Right lobe of liver (tissue), 6 donors: ENCODE measurements at regions of chr1 and their contacts with region 1.

Region 1: DNA sequence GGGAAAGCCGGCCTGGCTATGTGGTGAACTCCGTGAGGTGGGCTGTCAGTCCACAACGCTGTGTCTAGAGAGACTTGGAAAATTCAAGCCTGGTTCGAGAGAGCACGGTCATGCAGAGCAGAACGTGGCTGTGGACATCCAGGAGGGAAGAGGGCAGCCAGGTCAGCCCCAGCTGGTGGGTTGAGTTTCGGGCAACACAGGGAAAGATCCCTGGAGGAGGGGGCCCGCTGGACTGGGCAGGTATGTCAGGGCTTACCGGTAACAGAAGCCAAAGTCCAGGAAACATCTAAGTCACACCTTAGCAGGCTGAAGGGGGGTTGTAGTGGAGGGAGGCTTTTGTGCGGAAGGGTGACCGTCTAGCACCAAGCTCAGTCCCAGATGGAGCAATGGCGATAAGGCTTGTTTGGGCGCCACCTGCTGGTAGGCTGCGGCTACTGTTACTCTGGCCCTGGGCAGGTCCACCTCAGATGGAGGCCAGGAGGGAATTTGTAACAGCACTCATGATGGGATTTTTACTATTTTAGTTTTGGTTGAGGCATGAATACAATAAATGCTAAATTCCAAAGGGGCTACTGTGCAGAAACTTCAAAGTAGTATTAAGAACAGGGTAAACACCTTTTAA is 143.3 kb upstream of the ZNF644 start:
- DNase-seq: peak; percentile 81 to 86 (median 82)
- ATAC-seq: peak; percentile 93 to 98 (median 96)
- H3K4me3 ChIP-seq: no peak overlapping the region
- H3K27ac ChIP-seq: no peak overlapping the region
- H3K4me1 ChIP-seq: no peaks in the 10 kb centered on the region
- H3K27me3 ChIP-seq: no peaks in the 10 kb centered on the region
- CTCF ChIP-seq: peak; percentile 91 to 99 (median 94)
- POLR2A ChIP-seq: no peak

Region 2: DNA sequence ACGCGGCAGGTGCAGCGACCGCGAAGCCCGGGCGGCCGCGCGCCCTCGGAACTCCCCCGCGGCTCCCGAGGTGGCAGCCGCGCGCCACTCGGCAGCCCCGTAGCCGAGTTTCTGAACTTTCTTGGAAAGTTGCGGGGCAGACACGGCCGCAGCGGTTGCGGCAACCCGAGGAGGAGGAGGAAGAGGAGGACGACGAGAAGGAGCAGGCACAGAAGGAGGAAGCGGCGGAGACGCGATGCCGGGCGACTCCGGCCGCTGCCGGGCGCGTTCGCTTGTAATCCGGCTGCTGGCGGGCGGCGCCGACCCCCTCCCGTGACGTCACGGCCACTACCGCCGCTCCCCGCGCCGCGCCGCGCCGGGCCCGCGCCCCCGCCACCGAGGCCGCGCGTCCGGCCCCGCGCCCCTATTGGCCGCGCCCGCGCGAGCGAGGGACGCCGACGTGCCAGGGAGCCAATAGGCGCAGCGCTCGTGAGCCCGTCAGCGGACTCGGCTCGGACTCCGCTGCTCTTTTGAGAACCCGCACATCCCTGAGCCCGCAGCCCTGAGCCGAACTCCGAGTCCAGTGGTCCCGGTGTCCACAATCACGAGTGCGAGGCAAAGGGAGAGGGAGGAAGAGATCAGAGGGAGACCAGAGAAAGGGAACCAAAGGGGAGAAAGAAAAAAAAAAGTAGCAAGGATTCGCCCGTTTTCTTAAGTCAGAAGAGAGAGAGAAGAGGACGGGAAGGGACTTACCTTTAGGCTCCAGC is 447.3 kb before region 1 on chr1:
- intact Hi-C with region 1: loop called in 1 of 2 experiments (anchors 10 kb)
- DNase-seq: no peak
- ATAC-seq: peak in 3 of 4 donors; percentile 12 to 22 (median 18)
- H3K4me3 ChIP-seq: peak overlapping the region in 2 of 3 donors; percentile 8 to 10
- H3K27ac ChIP-seq: no peak overlapping the region
- H3K4me1 ChIP-seq: peaks cover 0 to 11% (median 0%) of the 10 kb centered on the region in 4 donors
- H3K27me3 ChIP-seq: peaks cover 18 to 60% of the 10 kb centered on the region in 2 donors
- CTCF ChIP-seq: no peak
- POLR2A ChIP-seq: no peak

Region 3: DNA sequence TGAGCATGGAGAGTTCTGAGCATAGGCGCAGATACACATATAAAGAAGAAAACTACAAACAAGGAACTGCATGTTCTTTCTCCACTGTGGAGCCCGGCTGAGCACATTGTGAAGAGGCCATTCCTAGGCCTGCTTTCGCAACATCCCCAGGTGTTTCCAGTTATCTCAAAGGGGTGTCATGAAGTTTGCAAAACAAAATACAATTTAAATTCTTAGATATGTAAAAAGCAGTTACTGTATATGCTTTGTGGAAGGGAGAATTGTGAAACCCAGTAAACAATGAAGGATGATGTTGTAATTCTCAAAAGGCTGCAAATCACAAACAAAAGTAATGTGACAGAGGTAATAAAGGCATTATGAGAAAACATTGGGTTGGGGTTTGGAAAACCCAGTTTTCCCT is 44.7 kb before region 1 on chr1:
- intact Hi-C with region 1: no loop called
- DNase-seq: no peak
- ATAC-seq: no peak
- H3K4me3 ChIP-seq: no peak overlapping the region
- H3K27ac ChIP-seq: peak overlapping the region in 1 of 3 donors; percentile 75
- H3K4me1 ChIP-seq: peaks cover 0 to 41% (median 9%) of the 10 kb centered on the region in 4 donors
- H3K27me3 ChIP-seq: no peaks in the 10 kb centered on the region
- CTCF ChIP-seq: no peak
- POLR2A ChIP-seq: no peak

Region 4: DNA sequence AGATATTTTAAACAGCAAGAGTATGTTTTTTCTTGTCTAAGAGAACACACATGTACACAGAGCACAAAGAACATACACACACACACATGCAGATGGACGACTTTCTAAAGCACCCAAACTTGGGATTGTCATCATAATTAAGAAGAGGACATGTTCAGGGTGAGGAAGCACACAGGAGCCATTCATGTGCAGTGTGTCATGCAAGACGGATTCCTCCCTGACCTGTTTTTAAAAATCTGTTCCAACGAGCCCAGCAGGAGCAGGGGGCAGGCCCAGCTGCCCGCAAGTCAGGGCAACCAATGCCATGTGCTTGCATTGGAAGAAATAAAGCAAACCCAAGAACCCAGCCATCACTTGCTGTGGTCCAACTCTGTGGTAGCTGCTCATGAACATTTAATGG is 24.0 kb after region 1 on chr1:
- intact Hi-C with region 1: no loop called
- DNase-seq: no peak
- ATAC-seq: no peak
- H3K4me3 ChIP-seq: no peak overlapping the region
- H3K27ac ChIP-seq: no peak overlapping the region
- H3K4me1 ChIP-seq: no peaks in the 10 kb centered on the region
- H3K27me3 ChIP-seq: no peaks in the 10 kb centered on the region
- CTCF ChIP-seq: no peak
- POLR2A ChIP-seq: no peak

Region 5: GRCh38 chr1:91282695-91283420 is 117.7 kb after region 1 on chr1:
- intact Hi-C with region 1: loop called in 1 of 2 experiments (anchors 10 kb)
- DNase-seq: peak in 1 of 3 donors; percentile 57
- ATAC-seq: peak; percentile 91 to 97 (median 96)
- H3K4me3 ChIP-seq: peak overlapping the region in 1 of 3 donors; percentile 3
- H3K27ac ChIP-seq: no peak overlapping the region
- H3K4me1 ChIP-seq: no peaks in the 10 kb centered on the region
- H3K27me3 ChIP-seq: no peaks in the 10 kb centered on the region
- CTCF ChIP-seq: peak; percentile 72 to 86 (median 80)
- POLR2A ChIP-seq: no peak